ENCODE measurements at regions of chr17 and their contacts with region 1.

Region 1: DNA sequence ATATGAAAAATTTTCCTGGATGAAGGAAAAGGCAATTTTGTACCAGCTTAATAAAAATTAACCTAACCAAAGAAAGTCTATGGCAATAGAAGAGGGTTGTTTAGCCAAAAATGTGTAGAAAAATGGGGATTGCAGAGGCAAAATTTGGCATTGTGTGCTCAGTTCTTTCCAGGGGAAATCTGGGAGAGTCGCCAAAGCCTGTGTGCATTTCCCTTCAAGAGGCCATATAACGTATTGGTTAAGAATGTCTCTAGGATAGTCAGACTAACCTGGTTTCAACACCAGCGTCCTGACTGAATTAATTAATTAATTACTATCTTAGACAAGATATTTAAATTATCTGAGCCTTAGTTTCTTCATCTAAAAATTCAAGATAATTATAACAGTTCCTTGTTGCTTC is 44.8 kb upstream of the HLF start:
- DNase-seq: no peak
- ATAC-seq: no peak
- H3K4me3 ChIP-seq: no peak overlapping the region
- H3K27ac ChIP-seq: no peak overlapping the region
- H3K4me1 ChIP-seq: no peaks in the 10 kb centered on the region
- H3K27me3 ChIP-seq: peaks cover 4% of the 10 kb centered on the region
- CTCF ChIP-seq: no peak
- POLR2A ChIP-seq: no peak
- RAD21 ChIP-seq: no peak

Region 2: DNA sequence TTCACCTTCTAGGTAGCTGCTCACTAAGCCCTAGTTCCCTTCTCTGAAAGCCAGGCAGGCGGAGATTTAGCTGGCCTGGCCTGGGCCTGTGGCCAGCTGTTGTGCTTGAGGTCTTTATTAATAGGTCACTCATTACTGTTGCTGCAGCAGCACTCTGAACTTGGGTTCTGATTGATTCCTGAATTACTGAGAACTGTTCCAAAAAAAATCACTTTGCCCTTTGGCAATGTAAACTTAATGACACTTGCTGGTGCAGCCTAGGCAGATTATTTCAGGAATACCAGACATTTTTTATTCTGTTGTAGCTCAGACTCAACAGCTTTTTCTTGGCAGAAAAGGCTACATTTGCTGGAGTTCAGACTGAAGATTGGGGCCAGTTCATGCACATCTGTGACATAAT is 316.6 kb before region 1 on chr17:
- CTCF ChIA-PET with region 1: no interaction called
- POLR2A ChIA-PET with region 1: no interaction called
- RAD21 ChIA-PET with region 1: no interaction called
- intact Hi-C with region 1: no loop called
- DNase-seq: no peak
- ATAC-seq: no peak
- H3K4me3 ChIP-seq: no peak overlapping the region
- H3K27ac ChIP-seq: no peak overlapping the region
- H3K4me1 ChIP-seq: peaks cover 11 to 18% of the 10 kb centered on the region in 2 experiments; a peak in 3 of 4 replicates
- H3K27me3 ChIP-seq: no peaks in the 10 kb centered on the region
- CTCF ChIP-seq: no peak
- POLR2A ChIP-seq: no peak
- RAD21 ChIP-seq: no peak

Region 3: DNA sequence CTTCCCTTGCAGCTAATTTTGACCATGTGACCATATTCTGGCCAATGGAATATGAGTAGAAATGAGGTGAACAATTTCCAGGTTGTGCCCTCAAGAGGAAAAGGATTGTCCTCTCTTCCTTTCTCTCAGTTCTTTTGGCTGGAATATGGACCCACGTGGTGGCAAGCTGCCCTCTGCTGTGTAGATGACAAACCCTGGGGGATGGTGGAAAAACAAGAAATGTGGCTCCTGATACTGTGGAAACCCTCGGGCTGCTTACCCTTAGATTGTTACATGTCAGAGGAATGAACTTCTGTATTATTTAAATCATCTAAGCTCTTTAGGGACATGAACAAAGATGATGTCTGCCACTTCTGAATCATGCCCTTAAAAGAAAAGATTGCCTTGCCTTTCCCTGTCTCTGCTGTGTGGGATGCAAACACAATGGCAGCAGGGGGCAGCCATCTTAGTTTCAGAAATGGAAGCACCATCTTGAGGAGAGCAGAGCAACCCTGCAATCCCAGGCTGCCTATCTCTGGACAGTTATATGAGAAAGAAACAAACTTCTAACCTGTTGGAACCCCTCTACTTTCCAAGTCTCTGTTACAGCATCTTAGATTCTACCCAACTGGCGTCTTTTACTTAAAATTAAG is 28.0 kb after region 1 on chr17:
- CTCF ChIA-PET with region 1: no interaction called
- POLR2A ChIA-PET with region 1: no interaction called
- RAD21 ChIA-PET with region 1: no interaction called
- intact Hi-C with region 1: loop called (anchors 1 kb)
- DNase-seq: no peak
- ATAC-seq: no peak
- H3K4me3 ChIP-seq: no peak overlapping the region
- H3K27ac ChIP-seq: no peak overlapping the region
- H3K4me1 ChIP-seq: no peaks in the 10 kb centered on the region
- H3K27me3 ChIP-seq: no peaks in the 10 kb centered on the region
- CTCF ChIP-seq: no peak
- POLR2A ChIP-seq: no peak
- RAD21 ChIP-seq: no peak

Measured in HCT116 (cell line).